Panc1 (cell line): ENCODE measurements at regions of chr6 and their contacts with region 1.

Region 1: DNA sequence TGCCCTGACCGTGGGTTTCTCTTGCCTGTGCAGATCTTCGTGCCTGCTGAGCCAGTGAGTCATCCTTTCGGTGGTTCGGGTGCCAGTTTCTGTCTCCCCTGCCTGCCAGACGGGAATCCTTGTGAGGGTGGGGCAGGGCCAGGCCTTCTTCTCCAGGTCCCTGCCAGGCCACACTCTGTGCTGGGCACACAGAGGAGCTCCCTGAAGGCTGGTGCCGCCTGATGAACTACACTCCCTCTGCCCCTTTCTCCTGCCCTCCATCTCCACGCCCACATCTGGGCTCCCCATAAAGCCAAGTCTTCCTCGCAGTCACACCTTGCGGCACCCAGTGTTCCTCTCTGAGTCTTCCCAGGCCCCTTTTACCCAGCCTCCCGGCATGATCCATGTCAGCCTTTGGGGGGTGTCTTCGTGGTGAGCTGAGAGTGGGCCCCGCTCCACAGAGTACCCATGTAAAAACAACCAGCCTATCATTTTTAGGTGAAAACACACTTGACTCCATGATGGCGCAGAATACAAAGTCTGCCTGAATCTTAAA is 19.4 kb downstream of the FGD2 start:
- DNase-seq: no peak
- ATAC-seq: no peak
- H3K4me3 ChIP-seq: no peak overlapping the region
- H3K27ac ChIP-seq: 0 out of 2 replicates have a peak overlapping the region, but pooled peaks have one; percentile 26
- H3K4me1 ChIP-seq: 0 out of 2 replicates have a peak, but pooled peaks cover 10% of the 10 kb centered on the region
- H3K27me3 ChIP-seq: no peaks in the 10 kb centered on the region
- CTCF ChIP-seq: no peak

Region 2: GRCh38 chr6:37051138-37052026 is 26.6 kb after region 1 on chr6:
- CTCF ChIA-PET with region 1: interaction called, 3 read pairs
- POLR2A ChIA-PET with region 1: no interaction called
- in situ Hi-C with region 1: no loop called
- intact Hi-C with region 1: loop called (anchors 1 kb)
- DNase-seq: no peak
- ATAC-seq: peak; percentile 88
- H3K4me3 ChIP-seq: no peak overlapping the region
- H3K27ac ChIP-seq: peak overlapping the region; percentile 68
- H3K4me1 ChIP-seq: peaks cover 5% of the 10 kb centered on the region; the same call in 1 of the 2 replicates
- H3K27me3 ChIP-seq: no peaks in the 10 kb centered on the region
- CTCF ChIP-seq: peak; percentile 97

Region 3: DNA sequence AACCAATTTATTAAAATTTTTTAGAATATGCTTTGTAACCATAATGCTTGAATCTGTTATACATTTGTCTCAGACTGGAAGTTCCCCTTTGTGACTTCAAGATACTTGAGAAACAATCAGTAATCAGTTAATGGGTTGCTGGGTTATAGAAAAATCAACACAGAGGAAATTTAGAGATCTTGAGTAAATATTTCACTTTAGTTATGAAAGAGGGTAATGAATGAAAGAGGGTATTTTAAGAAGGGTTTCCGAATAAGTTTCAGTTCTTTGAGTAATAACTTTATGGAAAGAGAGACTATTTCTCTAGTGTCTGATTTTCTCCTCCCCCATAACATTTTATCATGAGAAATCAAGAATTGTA is 816.1 kb after region 1 on chr6:
- CTCF ChIA-PET with region 1: no interaction called
- POLR2A ChIA-PET with region 1: no interaction called
- in situ Hi-C with region 1: no loop called
- intact Hi-C with region 1: no loop called
- DNase-seq: no peak
- ATAC-seq: no peak
- H3K4me3 ChIP-seq: no peak overlapping the region
- H3K27ac ChIP-seq: no peak overlapping the region; the same call in 1 of the 2 replicates
- H3K4me1 ChIP-seq: peaks cover 14% of the 10 kb centered on the region
- H3K27me3 ChIP-seq: no peaks in the 10 kb centered on the region
- CTCF ChIP-seq: no peak